Natural killer cell (primary cell): ENCODE measurements at regions of chr14 and their contacts with region 1.

Region 1: GRCh38 chr14:24108336-24108874 is 6.2 kb upstream of the DCAF11 start:
- DNase-seq: no peak
- ATAC-seq: peak in 2 of 3 donors; percentile 16 to 33
- H3K4me3 ChIP-seq: no peak overlapping the region
- H3K4me3 Mint-ChIP-seq: no peak overlapping the region
- H3K27ac ChIP-seq: peak overlapping the region; percentile 47
- H3K27ac Mint-ChIP-seq: peak overlapping the region; percentile 90 to 93
- H3K4me1 ChIP-seq: peaks cover 9% of the 10 kb centered on the region
- H3K4me1 Mint-ChIP-seq: peaks cover 8% of the 10 kb centered on the region in 2 donors
- H3K27me3 ChIP-seq: no peaks in the 10 kb centered on the region
- H3K27me3 Mint-ChIP-seq: no peaks in the 10 kb centered on the region
- CTCF ChIP-seq: no peak

Region 2: GRCh38 chr14:24013654-24014514 is 94.5 kb before region 1 on chr14:
- intact Hi-C with region 1: loop called (anchors 1 kb)
- DNase-seq: peak; percentile 25 to 87
- ATAC-seq: peak; percentile 93 to 98 (median 97)
- H3K4me3 ChIP-seq: no peak overlapping the region
- H3K4me3 Mint-ChIP-seq: no peak overlapping the region
- H3K27ac ChIP-seq: no peak overlapping the region
- H3K27ac Mint-ChIP-seq: no peak overlapping the region
- H3K4me1 ChIP-seq: peaks cover 5% of the 10 kb centered on the region
- H3K4me1 Mint-ChIP-seq: peaks cover 0 to 5% of the 10 kb centered on the region in 2 donors
- H3K27me3 ChIP-seq: no peaks in the 10 kb centered on the region
- H3K27me3 Mint-ChIP-seq: peaks cover 0 to 4% of the 10 kb centered on the region in 2 donors
- CTCF ChIP-seq: peak; percentile 89

Region 3: DNA sequence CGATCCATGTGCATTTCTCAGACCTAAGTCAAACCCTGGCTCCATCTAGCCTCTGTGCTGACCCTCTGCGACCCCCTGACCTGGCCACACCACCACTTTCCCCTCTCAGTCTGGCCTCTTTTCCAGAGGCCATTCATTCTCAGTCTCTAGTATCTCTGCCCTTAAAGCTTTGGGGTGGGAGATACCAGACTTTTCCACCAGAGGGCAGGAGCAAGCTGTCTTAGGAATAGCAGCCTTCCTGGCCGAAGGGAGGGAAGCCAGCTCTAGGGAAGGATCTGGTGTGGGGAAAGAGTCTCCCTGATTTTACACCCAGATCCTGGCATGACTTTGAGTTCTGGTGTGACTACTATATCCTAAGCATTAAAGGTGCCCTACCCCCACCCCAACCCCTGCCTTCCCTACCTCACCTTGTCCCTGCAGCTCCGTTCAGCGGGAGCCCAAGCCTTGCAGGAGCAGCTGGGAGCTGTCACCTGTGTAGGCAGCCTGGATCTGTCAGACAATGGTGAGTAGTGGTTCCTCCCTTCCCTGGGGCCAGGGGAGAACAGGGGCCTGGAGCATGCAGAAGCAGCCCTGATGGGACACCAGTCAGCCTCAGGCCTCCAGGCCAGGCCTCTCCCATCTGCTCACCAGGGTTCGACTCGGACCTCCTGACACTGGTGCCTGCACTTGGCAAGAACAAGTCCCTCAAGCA is 50.0 kb before region 1 on chr14:
- intact Hi-C with region 1: loop called (anchors 1 kb)
- DNase-seq: peak; percentile 27 to 54
- ATAC-seq: peak in 2 of 3 donors; percentile 70 to 73
- H3K4me3 ChIP-seq: no peak overlapping the region
- H3K4me3 Mint-ChIP-seq: no peak overlapping the region
- H3K27ac ChIP-seq: no peak overlapping the region
- H3K27ac Mint-ChIP-seq: peak overlapping the region in 1 of 2 donors; percentile 83
- H3K4me1 ChIP-seq: peaks cover 8% of the 10 kb centered on the region
- H3K4me1 Mint-ChIP-seq: peaks cover 2 to 30% of the 10 kb centered on the region in 2 donors
- H3K27me3 ChIP-seq: no peaks in the 10 kb centered on the region
- H3K27me3 Mint-ChIP-seq: peaks cover 0 to 2% of the 10 kb centered on the region in 2 donors
- CTCF ChIP-seq: peak; percentile 71

Region 4: DNA sequence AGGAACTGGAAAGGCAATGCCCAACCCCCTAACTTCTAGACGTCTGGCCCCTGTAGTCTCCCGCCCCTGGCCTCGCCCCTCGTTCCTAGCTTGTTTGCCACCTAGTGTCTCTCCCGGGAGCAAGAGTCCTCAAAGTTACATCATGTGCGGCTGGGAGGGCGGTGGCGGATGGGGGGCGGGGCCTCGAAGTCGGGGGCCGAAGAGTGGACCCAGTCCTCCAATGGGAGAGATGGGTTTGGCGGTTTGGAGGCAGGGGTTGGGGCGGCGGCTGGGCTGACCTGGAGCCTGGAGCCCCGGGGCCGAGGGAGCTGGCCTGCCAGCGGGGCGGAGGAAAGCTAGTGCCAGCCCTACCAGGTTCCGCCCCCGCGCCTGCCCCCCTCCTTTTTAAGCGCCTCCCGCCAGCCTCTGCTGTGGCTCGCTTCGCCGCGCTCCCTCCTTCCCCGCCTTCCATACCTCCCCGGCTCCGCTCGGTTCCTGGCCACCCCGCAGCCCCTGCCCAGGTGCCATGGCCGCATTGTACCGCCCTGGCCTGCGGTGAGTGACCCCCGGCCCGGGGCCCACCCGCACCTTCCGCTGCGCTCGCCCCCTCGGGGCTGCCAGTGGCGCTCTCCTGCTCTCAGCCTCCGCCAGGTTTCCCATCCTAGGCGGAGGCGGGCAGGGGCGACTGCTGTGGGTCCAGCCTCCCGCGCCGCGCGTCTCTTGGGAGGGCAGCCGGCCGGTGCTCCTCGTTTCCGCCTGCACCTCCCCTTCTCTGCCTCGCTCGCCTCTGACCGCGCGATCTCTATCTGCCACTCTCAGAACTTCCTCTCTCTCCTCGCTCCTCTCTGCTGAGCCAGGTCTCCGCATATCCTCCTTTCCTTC is 14.3 kb before region 1 on chr14 and contains the start of gene PCK2:
- intact Hi-C with region 1: loop called (anchors 2 kb)
- DNase-seq: peak; percentile 62 to 77
- ATAC-seq: peak; percentile 79 to 82 (median 79)
- H3K4me3 ChIP-seq: peak within 1 kb of the TSS; percentile 78
- H3K4me3 Mint-ChIP-seq: peak within 1 kb of the TSS; percentile 98
- H3K27ac ChIP-seq: peak within 1 kb of the TSS; percentile 90
- H3K27ac Mint-ChIP-seq: peak within 1 kb of the TSS; percentile 89 to 96
- H3K4me1 ChIP-seq: peaks cover 28% of the 10 kb centered on the region
- H3K4me1 Mint-ChIP-seq: peaks cover 20 to 38% of the 10 kb centered on the region in 2 donors
- H3K27me3 ChIP-seq: no peaks in the 10 kb centered on the region
- H3K27me3 Mint-ChIP-seq: no peaks in the 10 kb centered on the region
- CTCF ChIP-seq: no peak
- total RNA-seq, gene PCK2: 9.8 to 13.8 (median 12.3) TPM